PC-3 (cell line): ENCODE measurements at regions of chr19 and their contacts with region 1.

Region 1: DNA sequence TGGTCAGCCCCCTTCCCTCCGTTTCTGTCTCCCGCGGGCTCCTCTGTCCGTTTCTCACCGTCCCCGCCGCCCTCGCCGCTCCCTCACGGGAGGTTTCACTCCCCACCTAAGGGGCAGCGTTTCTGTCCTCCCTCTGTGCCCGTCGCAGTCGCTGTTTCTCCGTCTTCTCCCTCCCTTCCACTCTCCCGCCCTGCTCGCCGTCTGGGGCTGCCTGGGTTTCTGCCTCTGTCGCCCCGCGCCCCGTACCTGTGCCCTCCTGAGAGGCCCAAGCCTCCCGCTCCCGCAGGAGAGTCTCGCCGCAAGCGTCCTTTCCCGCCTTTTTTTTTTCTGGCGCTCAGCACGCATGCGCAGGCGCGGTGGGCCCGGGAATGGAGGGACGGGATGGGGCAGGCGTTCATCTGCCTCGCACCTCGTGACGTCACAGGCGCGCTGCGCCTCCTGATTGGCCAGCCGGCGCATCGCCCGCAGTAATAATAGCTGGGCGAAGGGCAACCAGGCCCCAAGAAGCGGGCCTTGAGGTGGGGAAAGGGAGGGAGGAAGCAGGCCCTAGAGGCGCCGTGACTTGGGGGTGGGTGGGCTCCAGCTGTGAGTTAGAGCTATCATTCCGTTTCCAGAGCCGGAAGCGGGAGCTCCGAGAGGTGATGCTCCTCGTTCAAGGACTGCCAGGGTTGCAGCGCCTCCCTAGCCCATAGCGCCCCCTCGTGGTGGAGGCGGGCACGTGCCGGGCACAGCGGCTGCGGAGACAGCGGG is 15.4 kb downstream of the SSC5D start:
- DNase-seq: peak; percentile 84
- ATAC-seq: peak; percentile 94
- H3K4me3 ChIP-seq: peak overlapping the region; percentile 51; the same call in 1 of the 2 replicates
- H3K27ac ChIP-seq: no peak overlapping the region
- H3K4me1 ChIP-seq: no peaks in the 10 kb centered on the region; the same call in 1 of the 2 replicates
- H3K27me3 ChIP-seq: no peaks in the 10 kb centered on the region
- CTCF ChIP-seq: peak; percentile 98

Region 2: GRCh38 chr19:55461259-55461973 is 42.3 kb before region 1 on chr19 and contains the start of gene ISOC2:
- CTCF ChIA-PET with region 1: interaction called, 33 read pairs
- POLR2A ChIA-PET with region 1: no interaction called
- intact Hi-C with region 1: no loop called
- DNase-seq: peak; percentile 100
- ATAC-seq: peak; percentile 97
- H3K4me3 ChIP-seq: peak within 1 kb of the TSS; percentile 91
- H3K27ac ChIP-seq: peak within 1 kb of the TSS; percentile 81
- H3K4me1 ChIP-seq: peaks cover 13% of the 10 kb centered on the region
- H3K27me3 ChIP-seq: no peaks in the 10 kb centered on the region
- CTCF ChIP-seq: no peak
- total RNA-seq, gene ISOC2: 251 and 270 TPM in 2 replicates

Region 3: DNA sequence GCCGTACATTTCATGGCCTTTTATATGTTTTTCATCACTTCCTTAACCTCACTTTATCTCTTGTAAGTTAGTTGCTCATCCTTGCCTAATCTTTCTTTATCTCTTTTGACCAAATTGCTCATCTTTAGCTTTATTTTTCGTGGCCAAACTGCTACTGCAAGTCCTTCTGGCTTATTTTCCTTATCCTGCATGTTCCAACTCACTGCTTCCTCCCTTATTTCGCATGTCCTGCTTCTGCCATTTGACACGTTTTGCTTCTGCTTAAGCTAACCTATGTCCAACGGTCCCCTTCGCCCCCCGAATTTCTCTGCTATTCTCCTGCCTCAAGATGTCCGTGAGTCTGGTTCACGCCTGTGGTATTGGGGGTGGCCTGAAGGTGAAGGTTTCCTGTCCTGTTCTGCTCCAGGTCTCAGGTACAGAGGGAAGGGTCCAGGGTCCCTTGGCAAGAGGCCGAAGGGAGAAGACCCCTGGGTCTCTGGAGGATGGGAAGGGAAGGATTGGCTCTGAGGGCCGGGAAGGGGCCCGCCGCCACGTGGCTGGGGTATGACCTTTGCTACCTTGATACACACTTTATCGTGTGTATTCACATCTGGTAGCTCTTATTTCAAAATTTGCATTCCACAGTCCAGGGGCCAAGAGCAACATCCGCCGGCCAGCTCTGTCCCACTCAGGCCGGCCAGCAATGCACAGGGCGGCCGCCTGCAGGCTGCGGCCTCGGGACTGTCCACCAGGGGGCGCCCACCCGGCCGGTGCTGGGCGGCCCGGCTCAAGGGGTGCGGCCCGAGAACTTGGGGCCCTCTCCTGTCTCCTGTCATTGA is 36.2 kb before region 1 on chr19:
- CTCF ChIA-PET with region 1: interaction called, 33 read pairs
- POLR2A ChIA-PET with region 1: no interaction called
- intact Hi-C with region 1: loop called (anchors 1 kb)
- DNase-seq: peak; percentile 68
- ATAC-seq: peak; percentile 94
- H3K4me3 ChIP-seq: peak overlapping the region; percentile 20; the same call in 1 of the 2 replicates
- H3K27ac ChIP-seq: no peak overlapping the region
- H3K4me1 ChIP-seq: peaks cover 8% of the 10 kb centered on the region
- H3K27me3 ChIP-seq: no peaks in the 10 kb centered on the region
- CTCF ChIP-seq: peak; percentile 99

Region 4: GRCh38 chr19:55476100-55476775 is 27.4 kb before region 1 on chr19 and contains the start of gene ZNF628:
- CTCF ChIA-PET with region 1: interaction called, 16 read pairs
- POLR2A ChIA-PET with region 1: interaction called, 3 read pairs
- intact Hi-C with region 1: no loop called
- DNase-seq: peak; percentile 99
- ATAC-seq: peak; percentile 95
- H3K4me3 ChIP-seq: peak within 1 kb of the TSS; percentile 76
- H3K27ac ChIP-seq: peak within 1 kb of the TSS; percentile 55
- H3K4me1 ChIP-seq: peaks cover 18% of the 10 kb centered on the region
- H3K27me3 ChIP-seq: no peaks in the 10 kb centered on the region
- CTCF ChIP-seq: no peak
- total RNA-seq, gene ZNF628: 11.8 and 24.2 TPM in 2 replicates

Region 5: GRCh38 chr19:55487632-55488152 is 16.0 kb before region 1 on chr19:
- CTCF ChIA-PET with region 1: interaction called, 13 read pairs
- POLR2A ChIA-PET with region 1: interaction called, 3 read pairs
- intact Hi-C with region 1: no loop called
- DNase-seq: peak; percentile 81
- ATAC-seq: peak; percentile 69
- H3K4me3 ChIP-seq: peak overlapping the region; percentile 9; the same call in 1 of the 2 replicates
- H3K27ac ChIP-seq: peak overlapping the region; percentile 73
- H3K4me1 ChIP-seq: peaks cover 33% of the 10 kb centered on the region
- H3K27me3 ChIP-seq: no peaks in the 10 kb centered on the region
- CTCF ChIP-seq: no peak

Region 6: GRCh38 chr19:56189785-56190184 is 686.1 kb after region 1 on chr19:
- CTCF ChIA-PET with region 1: no interaction called
- POLR2A ChIA-PET with region 1: no interaction called
- intact Hi-C with region 1: no loop called
- DNase-seq: no peak
- ATAC-seq: no peak
- H3K4me3 ChIP-seq: no peak overlapping the region
- H3K27ac ChIP-seq: no peak overlapping the region
- H3K4me1 ChIP-seq: no peaks in the 10 kb centered on the region
- H3K27me3 ChIP-seq: peaks cover 24% of the 10 kb centered on the region
- CTCF ChIP-seq: 0 out of 2 replicates have a peak, but pooled peaks have one; percentile 22